ENCODE measurements at regions of chr4 and their contacts with region 1.

Region 1: DNA sequence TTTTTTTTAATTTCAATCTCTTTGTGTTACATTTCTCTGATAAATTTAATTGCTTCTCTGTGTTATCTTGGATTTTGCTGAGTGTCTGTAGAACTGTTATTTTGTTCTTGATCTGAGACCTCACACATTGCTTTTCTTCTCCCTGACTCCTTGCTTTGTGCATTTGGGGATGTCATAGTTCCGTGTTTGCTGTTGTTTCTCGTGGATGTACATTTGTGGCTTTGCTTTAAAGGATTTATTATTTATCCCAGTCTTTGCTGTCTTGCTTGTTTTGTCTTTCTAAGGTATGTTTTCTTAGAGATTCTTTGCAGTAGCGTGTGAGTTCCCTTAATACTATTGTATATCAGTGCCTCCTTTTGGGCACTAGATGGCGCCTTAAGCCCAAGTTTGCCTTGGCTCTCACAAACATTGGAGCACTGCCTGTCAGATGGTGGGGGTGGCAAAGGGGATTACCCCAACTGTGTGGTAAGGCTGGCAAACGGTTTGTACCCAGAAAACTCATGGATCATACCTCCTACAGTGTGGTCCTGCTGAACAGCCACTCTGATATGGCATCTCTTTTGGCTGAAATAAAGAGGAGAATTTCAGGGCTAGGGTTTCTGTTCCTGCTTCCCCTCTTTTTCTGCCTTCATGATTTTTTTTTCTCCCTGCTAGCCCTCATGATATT is 96.4 kb downstream of the PGRMC2 start:
- DNase-seq: peak; percentile 77
- H3K4me3 ChIP-seq: no peak overlapping the region
- H3K27ac ChIP-seq: no peak overlapping the region
- H3K4me1 ChIP-seq: peaks cover 5% of the 10 kb centered on the region; the same call in 1 of the 2 replicates
- H3K27me3 ChIP-seq: no peaks in the 10 kb centered on the region

Region 2: DNA sequence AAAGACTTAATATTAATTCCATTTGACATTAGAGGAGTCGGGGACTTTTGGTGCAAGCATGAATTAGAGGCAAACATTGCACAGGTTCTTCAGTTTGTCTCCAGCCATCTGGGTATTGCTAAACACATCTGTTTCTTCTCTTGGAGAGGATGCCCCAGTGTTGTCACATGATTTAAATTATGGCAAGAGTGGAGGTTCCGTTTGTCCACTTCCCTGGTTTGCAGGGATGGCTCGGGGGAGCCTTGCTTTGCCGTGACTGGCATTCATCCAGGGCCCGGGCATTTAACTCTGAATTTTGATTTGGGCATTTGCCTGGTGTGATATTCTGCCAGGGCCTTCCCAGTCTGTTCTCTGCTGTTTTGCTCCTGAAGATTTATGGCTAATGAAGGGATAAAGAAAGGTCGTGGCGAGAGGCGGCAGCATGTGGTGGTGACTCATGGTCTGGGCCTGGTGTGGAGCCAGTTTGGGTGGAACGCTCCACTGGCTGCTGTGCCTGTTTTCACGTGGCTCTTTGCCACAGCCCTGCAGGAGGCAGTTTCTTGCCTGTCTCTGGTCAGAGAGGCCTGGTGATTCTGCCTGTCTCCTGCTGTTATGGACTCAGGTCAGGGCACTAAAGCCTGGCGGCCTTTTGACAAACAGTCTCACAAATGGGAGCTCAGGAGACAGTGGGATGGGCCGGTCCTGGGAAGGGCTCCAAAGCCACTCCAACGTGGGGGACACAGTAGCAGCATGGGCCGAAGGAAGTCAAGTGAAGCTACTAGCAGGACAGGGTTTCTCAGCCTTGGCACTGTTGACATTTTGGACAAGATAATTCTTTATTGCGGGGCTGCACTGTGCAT is 195.7 kb after region 1 on chr4:
- in situ Hi-C with region 1: no loop called
- DNase-seq: peak; percentile 98
- H3K4me3 ChIP-seq: peak overlapping the region; percentile 43
- H3K27ac ChIP-seq: peak overlapping the region; percentile 69
- H3K4me1 ChIP-seq: peaks cover 52% of the 10 kb centered on the region
- H3K27me3 ChIP-seq: no peaks in the 10 kb centered on the region

Region 3: DNA sequence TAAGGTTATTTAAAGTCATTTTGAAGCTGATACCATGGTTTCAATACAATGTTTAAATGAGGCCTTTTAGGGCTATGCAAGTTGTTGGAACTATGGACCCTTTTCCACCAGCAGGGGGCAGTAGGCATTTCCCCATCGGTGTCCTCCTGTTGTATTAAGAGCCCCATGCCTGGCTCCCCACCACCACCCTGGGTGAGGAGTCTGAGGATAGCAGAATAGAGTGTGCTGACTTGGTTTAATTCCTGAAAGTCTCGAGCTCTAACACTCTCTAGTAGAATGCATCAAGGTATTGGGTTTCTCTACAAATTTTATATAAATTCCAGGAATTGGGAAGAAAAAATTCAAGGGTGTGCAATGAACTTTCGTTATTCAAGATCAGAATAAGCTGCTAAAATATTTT is 383.5 kb after region 1 on chr4:
- in situ Hi-C with region 1: loop called (anchors 25 kb)
- DNase-seq: peak; percentile 58
- H3K4me3 ChIP-seq: no peak overlapping the region
- H3K27ac ChIP-seq: peak overlapping the region; percentile 82; the same call in 1 of the 2 replicates
- H3K4me1 ChIP-seq: peaks cover 51% of the 10 kb centered on the region
- H3K27me3 ChIP-seq: no peaks in the 10 kb centered on the region

Region 4: GRCh38 chr4:128863312-128864075 is 672.2 kb after region 1 on chr4:
- in situ Hi-C with region 1: loop called (anchors 10 kb)
- DNase-seq: peak; percentile 79
- H3K4me3 ChIP-seq: no peak overlapping the region
- H3K27ac ChIP-seq: no peak overlapping the region
- H3K4me1 ChIP-seq: peaks cover 21% of the 10 kb centered on the region
- H3K27me3 ChIP-seq: no peaks in the 10 kb centered on the region

Region 5: GRCh38 chr4:129344058-129344457 is 1152.8 kb after region 1 on chr4:
- in situ Hi-C with region 1: loop called (anchors 25 kb)
- DNase-seq: peak; percentile 66
- H3K4me3 ChIP-seq: peak overlapping the region; percentile 72
- H3K27ac ChIP-seq: no peak overlapping the region
- H3K4me1 ChIP-seq: peaks cover 17% of the 10 kb centered on the region
- H3K27me3 ChIP-seq: 0 out of 2 replicates have a peak, but pooled peaks cover 6% of the 10 kb centered on the region